Activated CD4-positive, alpha-beta T cell treated with anti-CD3 and anti-CD28 coated beads, Interleukin-2, amount 10 ng/mL, durations not matched to agents 24 days and 14 days (primary cell): ENCODE measurements at regions of chr14 and their contacts with region 1.

Region 1: DNA sequence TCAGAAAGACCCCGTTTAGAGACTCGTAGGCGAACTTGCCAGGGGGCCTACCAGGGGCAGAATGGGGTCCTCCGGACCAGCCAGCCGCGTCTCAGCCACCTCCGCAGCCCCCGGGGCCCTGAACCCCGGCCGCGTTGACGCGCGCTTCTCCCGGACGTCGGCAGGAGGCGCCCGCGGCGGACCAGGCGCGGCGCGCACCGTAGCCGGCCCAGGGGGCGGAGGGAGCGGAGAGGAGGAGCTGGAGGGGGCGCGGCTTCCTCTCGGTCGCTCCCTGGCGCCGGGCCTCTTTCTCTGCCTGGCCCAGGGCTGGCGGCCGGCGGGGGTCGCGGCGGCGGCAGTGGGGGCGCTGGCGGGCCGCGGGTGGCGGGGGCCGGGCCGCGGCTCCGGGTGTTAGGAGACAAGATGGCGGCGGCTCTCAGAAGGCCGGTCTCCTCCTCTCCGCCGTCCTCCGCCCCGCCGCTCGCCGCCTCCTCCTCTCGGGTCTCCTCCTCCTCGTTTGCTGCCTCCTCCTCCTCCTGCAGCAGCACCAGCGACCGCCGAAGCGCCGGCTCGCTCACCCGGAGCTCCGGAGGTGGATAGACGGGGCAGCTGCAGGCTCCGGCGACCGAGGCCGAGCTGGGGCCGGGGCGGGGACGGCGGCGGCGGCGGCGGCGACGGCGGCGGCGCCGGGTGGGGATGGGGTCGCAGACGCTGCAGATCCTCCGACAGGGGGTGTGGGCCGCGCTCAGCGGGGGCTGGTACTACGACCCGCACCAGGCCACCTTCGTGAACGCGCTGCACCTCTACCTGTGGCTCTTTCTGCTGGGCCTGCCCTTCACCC is at the start of gene PCNX1:
- DNase-seq: peak; percentile 97
- H3K4me3 Mint-ChIP-seq: peak within 1 kb of the TSS; percentile 94
- H3K27ac Mint-ChIP-seq: peak within 1 kb of the TSS; percentile 95
- H3K4me1 Mint-ChIP-seq: peaks cover 54% of the 10 kb centered on the region
- H3K27me3 Mint-ChIP-seq: no peaks in the 10 kb centered on the region
- total RNA-seq, gene PCNX1: 45.5 and 56.0 TPM in 2 replicates

Region 2: GRCh38 chr14:70821584-70822529 is 85.5 kb before region 1 on chr14:
- intact Hi-C with region 1: loop called (anchors 2 kb)
- DNase-seq: peak; percentile 88
- H3K4me3 Mint-ChIP-seq: peak overlapping the region; percentile 89
- H3K27ac Mint-ChIP-seq: peak overlapping the region; percentile 81
- H3K4me1 Mint-ChIP-seq: peaks cover 25% of the 10 kb centered on the region
- H3K27me3 Mint-ChIP-seq: peaks cover 19% of the 10 kb centered on the region

Region 3: GRCh38 chr14:70887207-70887681 is 20.1 kb before region 1 on chr14:
- intact Hi-C with region 1: loop called (anchors 1 kb)
- DNase-seq: no peak
- H3K4me3 Mint-ChIP-seq: peak overlapping the region; percentile 76
- H3K27ac Mint-ChIP-seq: peak overlapping the region; percentile 93
- H3K4me1 Mint-ChIP-seq: peaks cover 80% of the 10 kb centered on the region
- H3K27me3 Mint-ChIP-seq: no peaks in the 10 kb centered on the region

Region 4: DNA sequence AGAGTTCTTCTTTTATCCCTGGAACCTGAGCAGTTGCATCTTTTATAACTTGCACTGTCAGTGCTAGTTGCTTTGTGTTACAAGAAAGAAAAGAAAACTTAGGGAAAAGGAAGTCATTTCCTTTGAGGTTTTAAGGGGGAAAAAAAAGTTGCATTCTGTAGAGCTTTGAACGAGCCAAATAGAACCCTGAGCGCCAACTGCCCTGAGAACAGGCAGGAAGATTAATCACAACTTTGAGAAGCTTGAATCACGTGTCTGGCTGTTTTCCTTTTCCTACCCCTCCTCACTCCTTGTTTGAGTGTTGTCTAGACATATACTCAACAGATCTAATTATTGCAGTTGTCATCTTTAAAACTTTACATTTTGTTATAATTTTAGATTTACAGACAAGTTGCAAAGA is 12.4 kb after region 1 on chr14:
- intact Hi-C with region 1: loop called (anchors 1 kb)
- DNase-seq: no peak
- H3K4me3 Mint-ChIP-seq: peak overlapping the region; percentile 50
- H3K27ac Mint-ChIP-seq: peak overlapping the region; percentile 22
- H3K4me1 Mint-ChIP-seq: peaks cover 62% of the 10 kb centered on the region
- H3K27me3 Mint-ChIP-seq: no peaks in the 10 kb centered on the region

Region 5: GRCh38 chr14:70955543-70956480 is 48.4 kb after region 1 on chr14:
- intact Hi-C with region 1: loop called (anchors 2 kb)
- DNase-seq: peak; percentile 81
- H3K4me3 Mint-ChIP-seq: no peak overlapping the region
- H3K27ac Mint-ChIP-seq: no peak overlapping the region
- H3K4me1 Mint-ChIP-seq: peaks cover 24% of the 10 kb centered on the region
- H3K27me3 Mint-ChIP-seq: no peaks in the 10 kb centered on the region

Region 6: DNA sequence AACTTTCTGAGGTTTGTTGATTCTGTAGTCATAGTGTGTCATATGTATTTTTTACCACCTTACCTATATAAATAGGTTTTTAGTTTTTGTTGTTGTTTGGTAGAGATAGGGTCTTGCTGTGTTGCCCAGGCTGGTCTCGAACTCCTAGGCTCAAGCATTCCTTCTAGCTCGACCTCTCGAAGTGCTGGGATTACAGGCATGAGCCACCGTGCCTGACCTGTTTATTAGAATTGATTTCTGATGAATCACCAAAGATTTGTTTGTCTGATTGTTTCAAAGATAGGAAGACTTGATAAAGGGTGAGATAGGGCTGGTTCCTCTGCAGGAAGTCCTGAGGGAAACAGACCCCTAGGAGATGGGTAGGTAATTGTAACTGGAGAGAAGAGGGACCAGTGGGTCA is 481.5 kb after region 1 on chr14:
- intact Hi-C with region 1: no loop called
- DNase-seq: peak; percentile 27
- H3K4me3 Mint-ChIP-seq: no peak overlapping the region
- H3K27ac Mint-ChIP-seq: no peak overlapping the region
- H3K4me1 Mint-ChIP-seq: peaks cover 15% of the 10 kb centered on the region
- H3K27me3 Mint-ChIP-seq: no peaks in the 10 kb centered on the region